ENCODE measurements at regions of chr14 and their contacts with region 1.

Region 1: DNA sequence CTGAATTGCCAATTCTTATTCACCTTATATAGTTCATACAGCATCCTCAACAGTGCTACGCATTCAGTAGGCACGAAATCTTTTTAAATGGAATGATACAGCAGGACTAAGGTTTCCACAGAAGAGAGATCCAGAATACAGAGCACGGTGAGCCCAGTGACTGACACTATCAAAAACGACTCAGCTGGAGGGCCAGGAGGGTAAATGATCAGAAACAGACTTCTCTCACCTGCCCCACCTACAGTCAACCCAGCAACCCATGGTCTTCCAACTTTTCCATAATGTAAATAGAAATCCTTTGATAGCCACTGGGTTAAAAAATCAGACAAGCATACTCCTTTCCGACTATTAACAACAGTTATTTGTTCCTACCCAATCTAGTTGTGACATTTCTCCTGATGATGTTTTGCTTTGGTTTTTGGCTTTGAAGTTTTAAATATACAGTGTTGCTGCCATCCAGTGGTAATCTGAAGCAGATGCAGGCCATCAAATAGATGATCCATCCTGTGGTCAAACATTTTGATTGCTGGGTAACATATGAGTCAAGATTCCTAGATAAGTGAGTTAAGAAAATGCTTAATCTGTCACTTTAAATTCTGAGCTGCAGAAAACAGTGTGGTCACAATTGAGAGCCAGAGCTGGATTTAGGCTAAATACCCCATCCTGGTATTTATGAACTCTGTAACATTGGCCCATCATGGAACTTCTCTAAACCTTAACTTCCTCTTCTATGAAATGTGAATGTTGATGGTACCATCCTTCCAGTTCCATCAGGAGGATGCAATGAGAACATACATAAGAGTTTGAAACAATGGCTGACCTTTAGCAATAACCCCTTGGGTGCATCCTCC is 42.0 kb downstream of the GPHB5 start:
- DNase-seq: peak in 1 of 2 donors; percentile 67
- H3K4me3 ChIP-seq: no peak overlapping the region
- H3K27ac ChIP-seq: no peak overlapping the region
- H3K4me1 ChIP-seq: peaks cover 0 to 31% (median 0%) of the 10 kb centered on the region in 4 donors
- H3K27me3 ChIP-seq: no peaks in the 10 kb centered on the region
- CTCF ChIP-seq: peak in 5 of 7 experiments; percentile 65 to 78 (median 68)
- EP300 ChIP-seq: no peak
- POLR2A ChIP-seq: no peak

Region 2: DNA sequence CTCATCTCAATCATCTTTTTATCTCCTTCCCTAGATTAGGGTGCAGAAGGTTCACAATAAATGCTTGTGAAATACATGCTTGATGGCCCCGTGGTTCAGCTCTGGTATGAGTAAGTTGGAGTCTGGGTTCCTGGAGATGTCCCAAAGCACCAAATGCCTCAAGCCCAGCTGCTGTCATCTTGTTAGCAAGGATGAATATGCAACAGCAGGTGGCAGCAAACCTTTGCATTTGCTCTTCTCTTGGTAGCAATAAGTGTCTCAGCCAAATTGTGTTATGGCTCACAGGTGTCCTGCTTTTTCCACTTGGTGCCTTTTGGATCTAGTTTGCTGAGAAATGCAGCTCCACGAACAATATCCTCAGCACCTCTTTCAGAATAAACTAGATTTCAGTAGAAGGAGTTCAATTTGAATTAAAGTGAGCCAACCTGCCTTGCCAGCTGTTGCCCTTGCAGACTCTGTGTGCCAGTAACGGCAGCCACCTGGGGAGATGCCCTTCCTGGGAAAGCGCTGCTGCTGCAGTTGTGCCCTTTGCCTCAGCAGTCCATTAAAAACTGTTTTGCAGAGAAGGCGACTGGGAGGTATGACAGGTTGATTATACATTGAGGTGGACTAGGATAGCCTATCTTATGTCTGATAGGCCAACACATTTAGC is 1097.2 kb before region 1 on chr14:
- intact Hi-C with region 1: loop called (anchors 10 kb)
- DNase-seq: peak; percentile 54 to 89
- H3K4me3 ChIP-seq: no peak overlapping the region
- H3K27ac ChIP-seq: no peak overlapping the region
- H3K4me1 ChIP-seq: no peaks in the 10 kb centered on the region
- H3K27me3 ChIP-seq: peaks cover 0 to 5% (median 0%) of the 10 kb centered on the region in 3 donors
- CTCF ChIP-seq: peak in 5 of 7 experiments; percentile 7 to 57 (median 35)
- EP300 ChIP-seq: no peak
- POLR2A ChIP-seq: no peak

Region 3: DNA sequence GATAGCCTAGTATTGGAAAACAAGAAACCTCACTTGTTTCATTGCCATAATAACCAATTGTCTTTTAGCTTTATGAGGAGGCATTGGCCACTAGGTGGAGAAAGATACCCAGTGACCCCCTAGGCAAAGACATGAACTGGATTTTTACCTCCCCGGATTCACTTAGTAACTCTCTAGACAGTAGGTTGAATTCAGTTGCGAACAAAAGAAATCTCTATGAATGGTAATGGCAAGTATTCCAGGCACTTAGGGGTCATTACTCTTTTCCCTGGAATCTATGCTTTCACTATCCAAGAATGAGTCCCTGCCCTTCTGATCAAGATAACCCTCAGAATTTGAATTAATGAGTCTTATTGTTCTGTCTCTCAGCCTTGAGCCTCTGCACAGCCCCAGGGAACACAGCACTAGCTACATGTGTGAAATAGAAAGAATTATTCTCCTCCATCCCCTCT is 101.9 kb before region 1 on chr14:
- intact Hi-C with region 1: loop called (anchors 10 kb)
- DNase-seq: peak in 1 of 2 donors; percentile 66
- H3K4me3 ChIP-seq: no peak overlapping the region
- H3K27ac ChIP-seq: no peak overlapping the region
- H3K4me1 ChIP-seq: peaks cover 0 to 19% (median 0%) of the 10 kb centered on the region in 4 donors
- H3K27me3 ChIP-seq: no peaks in the 10 kb centered on the region
- CTCF ChIP-seq: peak in 3 of 7 experiments; percentile 23 to 48 (median 34)
- EP300 ChIP-seq: no peak
- POLR2A ChIP-seq: no peak

Region 4: GRCh38 chr14:63910583-63911363 is 634.1 kb after region 1 on chr14:
- intact Hi-C with region 1: no loop called
- DNase-seq: peak in 1 of 2 donors; percentile 69
- H3K4me3 ChIP-seq: no peak overlapping the region
- H3K27ac ChIP-seq: no peak overlapping the region
- H3K4me1 ChIP-seq: peaks cover 7 to 30% (median 19%) of the 10 kb centered on the region in 4 donors
- H3K27me3 ChIP-seq: no peaks in the 10 kb centered on the region
- CTCF ChIP-seq: no peak
- EP300 ChIP-seq: no peak
- POLR2A ChIP-seq: no peak

Measured in stomach (tissue), 19 donors.